HAP-1 (cell line): ENCODE measurements at regions of chr13 and their contacts with region 1.

Region 1: GRCh38 chr13:42102961-42103865 is 54.8 kb downstream of the DGKH start:
- DNase-seq: no peak
- H3K4me3 ChIP-seq: no peak overlapping the region
- H3K4me1 ChIP-seq: no peaks in the 10 kb centered on the region
- H3K27me3 ChIP-seq: no peaks in the 10 kb centered on the region

Region 2: DNA sequence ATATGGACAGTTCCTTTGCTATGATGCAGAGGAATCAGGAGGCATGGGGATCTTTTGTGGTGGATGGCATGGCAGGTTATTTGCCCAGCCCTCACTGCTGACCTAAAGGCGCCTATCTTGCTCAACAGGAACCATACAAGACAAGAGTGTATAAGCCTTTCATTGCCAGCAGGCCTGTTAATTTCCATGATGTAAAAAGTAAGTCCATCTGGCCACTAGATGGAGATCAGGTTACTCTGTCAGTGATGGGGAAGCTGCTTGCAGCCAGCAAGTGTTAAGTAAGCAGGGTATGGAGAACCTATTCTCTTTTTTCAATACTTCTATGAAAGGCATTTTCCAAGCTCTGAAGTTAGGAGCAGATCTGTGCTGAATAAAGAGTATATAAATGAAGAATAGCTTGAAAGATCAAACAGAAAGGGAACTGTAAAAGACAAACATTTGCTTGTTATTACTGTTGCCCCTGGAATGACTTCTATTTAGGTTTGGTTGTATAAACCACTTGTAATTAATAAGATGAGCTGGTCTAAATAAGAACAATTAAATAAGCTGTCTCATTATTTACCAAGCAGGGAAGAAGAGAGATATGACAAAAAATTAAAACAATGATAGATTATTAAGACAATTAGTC is 435.0 kb before region 1 on chr13:
- in situ Hi-C with region 1: loop called (anchors 10 kb)
- DNase-seq: peak; percentile 57 to 85
- H3K4me3 ChIP-seq: no peak overlapping the region
- H3K4me1 ChIP-seq: no peaks in the 10 kb centered on the region
- H3K27me3 ChIP-seq: no peaks in the 10 kb centered on the region